Ovary (tissue), 10 donors: ENCODE measurements at regions of chr12 and their contacts with region 1.

Region 1: DNA sequence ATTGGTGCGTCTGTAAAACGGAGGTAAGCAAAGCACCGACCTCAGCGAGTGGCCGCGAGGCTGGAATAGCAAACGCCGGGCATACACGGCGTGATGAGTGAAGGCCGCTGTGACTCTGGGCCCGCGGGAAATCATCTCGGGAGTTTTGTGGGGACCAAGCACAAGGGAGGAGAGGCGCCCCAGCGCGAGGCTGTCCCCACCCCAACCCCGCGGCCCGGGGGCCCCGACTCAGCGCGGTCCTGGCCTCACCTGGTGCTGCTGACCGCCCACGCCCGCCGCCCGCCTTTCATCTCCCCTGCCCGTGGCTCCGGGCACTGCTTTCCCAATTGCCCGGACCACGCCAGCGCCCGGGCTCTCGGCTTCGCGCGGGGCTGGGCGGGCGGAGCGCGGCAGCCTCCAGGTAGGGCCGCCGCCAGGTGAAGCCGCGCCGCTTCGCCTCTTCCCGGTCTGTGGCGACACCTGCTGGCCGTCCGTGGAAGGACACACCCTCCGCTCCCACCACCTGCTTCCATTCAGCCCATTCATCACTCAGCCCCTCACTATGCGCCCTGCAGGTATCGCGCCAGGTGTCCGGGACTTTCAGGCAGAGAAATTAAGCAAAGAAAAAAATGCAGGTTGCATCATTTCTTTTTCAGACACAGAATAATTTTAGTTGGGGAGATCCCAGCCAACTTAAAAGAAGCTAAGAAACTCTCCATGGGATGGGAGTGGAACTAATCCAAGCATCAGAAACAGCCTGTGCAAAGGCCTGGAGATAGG is 360.4 kb downstream of the MED13L start:
- DNase-seq: peak; percentile 29 to 76 (median 61)
- H3K4me3 ChIP-seq: no peak overlapping the region
- H3K27ac ChIP-seq: no peak overlapping the region
- H3K4me1 ChIP-seq: no peaks in the 10 kb centered on the region
- H3K27me3 ChIP-seq: no peaks in the 10 kb centered on the region
- CTCF ChIP-seq: peak; percentile 60 to 90 (median 89)
- EP300 ChIP-seq: no peak
- POLR2A ChIP-seq: no peak

Region 2: DNA sequence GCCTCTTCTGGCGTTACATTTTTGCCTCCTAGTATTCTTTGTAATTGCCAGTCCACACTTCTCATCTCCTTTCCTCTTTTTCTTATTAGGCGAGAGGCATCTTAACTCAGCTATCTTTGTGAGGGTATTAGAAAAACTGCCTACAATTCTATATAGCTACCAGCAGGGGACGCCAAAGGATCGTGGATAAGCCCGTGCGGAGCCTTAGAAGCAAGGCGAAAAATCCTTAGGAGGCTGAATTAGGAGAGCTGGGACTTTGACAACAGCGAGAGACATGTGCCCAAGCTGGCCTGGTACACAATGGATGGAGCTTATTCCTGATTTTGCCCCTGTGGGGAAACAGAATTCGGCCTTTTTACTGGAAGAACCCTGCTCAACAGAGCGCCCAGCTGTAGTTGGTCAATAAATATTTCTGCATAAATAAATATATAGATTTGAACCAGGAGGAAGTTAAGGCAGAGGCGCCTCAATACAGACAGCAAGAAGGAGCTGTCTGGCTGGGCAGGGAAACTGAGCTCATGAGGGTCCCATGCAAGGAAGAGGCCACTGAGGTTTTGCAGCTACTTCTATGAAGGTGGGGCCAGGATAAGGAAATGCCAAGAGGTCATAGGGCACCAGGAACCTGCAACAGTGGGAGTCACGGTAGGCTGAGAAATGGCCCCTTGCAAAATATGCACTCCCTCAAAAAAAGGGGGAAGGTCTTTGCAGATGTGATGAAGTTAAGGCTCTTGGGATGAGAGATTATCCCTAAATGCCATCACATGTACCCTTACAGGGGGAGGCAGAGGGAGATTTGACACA is 1936.4 kb before region 1 on chr12:
- intact Hi-C with region 1: loop called in 3 of 4 experiments (anchors 5 to 10 kb)
- DNase-seq: no peak
- H3K4me3 ChIP-seq: no peak overlapping the region
- H3K27ac ChIP-seq: no peak overlapping the region
- H3K4me1 ChIP-seq: no peaks in the 10 kb centered on the region
- H3K27me3 ChIP-seq: no peaks in the 10 kb centered on the region
- CTCF ChIP-seq: peak in 2 of 3 donors; percentile 31 to 50
- EP300 ChIP-seq: no peak
- POLR2A ChIP-seq: no peak

Region 3: GRCh38 chr12:114662512-114663177 is 1254.4 kb before region 1 on chr12:
- intact Hi-C with region 1: loop called (anchors 2 to 5 kb)
- DNase-seq: peak; percentile 73 to 92 (median 84)
- H3K4me3 ChIP-seq: no peak overlapping the region
- H3K27ac ChIP-seq: no peak overlapping the region
- H3K4me1 ChIP-seq: peaks cover 2% of the 10 kb centered on the region
- H3K27me3 ChIP-seq: no peaks in the 10 kb centered on the region
- CTCF ChIP-seq: peak; percentile 87 to 92 (median 92)
- EP300 ChIP-seq: no peak
- POLR2A ChIP-seq: no peak

Region 4: DNA sequence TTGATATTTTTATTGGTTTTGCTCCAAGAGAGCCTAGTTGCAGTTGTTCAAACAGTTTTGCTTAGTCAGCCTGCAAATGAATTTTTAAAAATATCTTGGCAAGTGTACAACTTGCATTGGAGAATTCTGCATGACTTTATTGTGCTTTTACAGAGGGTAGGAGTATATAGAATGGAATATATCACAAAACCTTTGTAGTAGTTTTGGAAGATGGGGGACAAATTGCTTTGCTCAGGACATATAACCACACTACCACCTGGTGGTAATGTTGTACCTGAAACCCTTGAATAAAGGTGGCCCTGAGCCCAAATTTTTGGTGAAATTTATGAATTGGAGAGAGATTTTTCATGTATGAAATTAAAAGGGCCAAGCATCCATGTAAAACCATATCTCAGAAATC is 284.8 kb before region 1 on chr12:
- intact Hi-C with region 1: no loop called
- DNase-seq: no peak
- H3K4me3 ChIP-seq: no peak overlapping the region
- H3K27ac ChIP-seq: no peak overlapping the region
- H3K4me1 ChIP-seq: no peaks in the 10 kb centered on the region
- H3K27me3 ChIP-seq: no peaks in the 10 kb centered on the region
- CTCF ChIP-seq: no peak
- EP300 ChIP-seq: no peak
- POLR2A ChIP-seq: no peak

Region 5: GRCh38 chr12:115752913-115753726 is 164.0 kb before region 1 on chr12:
- intact Hi-C with region 1: loop called in 1 of 4 experiments (anchors 5 kb)
- DNase-seq: peak; percentile 20 to 50 (median 22)
- H3K4me3 ChIP-seq: no peak overlapping the region
- H3K27ac ChIP-seq: no peak overlapping the region
- H3K4me1 ChIP-seq: no peaks in the 10 kb centered on the region
- H3K27me3 ChIP-seq: no peaks in the 10 kb centered on the region
- CTCF ChIP-seq: peak; percentile 26 to 64 (median 57)
- EP300 ChIP-seq: no peak
- POLR2A ChIP-seq: no peak

Region 6: DNA sequence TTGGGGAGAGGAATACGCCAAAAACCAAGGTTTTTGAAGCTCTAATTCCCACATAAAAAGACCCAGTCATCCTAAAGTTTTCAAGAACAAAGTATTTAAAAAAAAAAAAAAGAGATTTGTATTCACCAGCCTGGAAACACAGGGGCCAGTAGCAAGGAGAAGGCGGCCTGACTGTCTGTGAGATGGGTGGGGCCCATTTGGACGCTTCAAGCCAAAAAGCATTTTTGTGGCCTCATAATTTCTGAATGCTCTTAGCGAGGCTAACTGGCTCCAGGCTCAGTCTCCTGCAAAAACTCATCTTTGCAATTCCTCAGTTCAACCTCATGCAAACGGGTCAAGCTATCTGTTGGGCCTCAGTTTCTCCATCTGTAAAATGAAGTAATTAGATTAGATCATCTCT is 153.7 kb before region 1 on chr12:
- intact Hi-C with region 1: loop called in 2 of 4 experiments (anchors 5 to 10 kb)
- DNase-seq: no peak
- H3K4me3 ChIP-seq: no peak overlapping the region
- H3K27ac ChIP-seq: no peak overlapping the region
- H3K4me1 ChIP-seq: no peaks in the 10 kb centered on the region
- H3K27me3 ChIP-seq: no peaks in the 10 kb centered on the region
- CTCF ChIP-seq: no peak
- EP300 ChIP-seq: no peak
- POLR2A ChIP-seq: no peak